Endothelial cell of umbilical vein (primary cell): ENCODE measurements at regions of chr7 and their contacts with region 1.

Region 1: GRCh38 chr7:139731802-139732470 is 45.9 kb downstream of the HIPK2 start:
- DNase-seq: peak; percentile 81
- H3K4me3 ChIP-seq: peak overlapping the region in 1 of 3 experiments; percentile 50
- H3K27ac ChIP-seq: peak overlapping the region; percentile 87
- H3K4me1 ChIP-seq: peaks cover 53% of the 10 kb centered on the region
- H3K27me3 ChIP-seq: no peaks in the 10 kb centered on the region
- CTCF ChIP-seq: no peak
- POLR2A ChIP-seq: no peak

Region 2: DNA sequence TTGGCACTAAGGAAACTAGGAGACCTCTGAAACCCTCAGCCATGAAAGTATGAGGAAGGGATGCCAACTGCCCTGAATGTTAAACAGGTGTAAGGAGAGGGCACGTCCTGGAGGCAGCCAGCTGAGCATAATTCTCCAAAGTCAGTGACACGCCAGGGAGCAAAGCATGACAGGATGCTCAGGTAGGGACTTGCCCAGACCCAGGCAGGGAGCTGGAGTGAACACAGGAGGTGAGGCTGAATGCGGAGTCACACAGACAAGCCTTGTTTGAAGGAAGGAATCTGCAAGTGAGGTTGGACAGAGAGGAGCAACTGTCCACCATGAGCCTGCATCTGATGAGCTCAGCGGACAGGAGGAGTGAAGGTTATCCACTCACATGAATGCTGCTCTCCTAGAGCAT is 290.0 kb before region 1 on chr7:
- CTCF ChIA-PET with region 1: no interaction called
- POLR2A ChIA-PET with region 1: no interaction called
- dilution Hi-C with region 1: no loop called
- intact Hi-C with region 1: no loop called
- DNase-seq: no peak
- H3K4me3 ChIP-seq: no peak overlapping the region
- H3K27ac ChIP-seq: no peak overlapping the region
- H3K4me1 ChIP-seq: no peaks in the 10 kb centered on the region
- H3K27me3 ChIP-seq: no peaks in the 10 kb centered on the region
- CTCF ChIP-seq: no peak
- POLR2A ChIP-seq: no peak

Region 3: GRCh38 chr7:139680676-139681462 is 51.1 kb before region 1 on chr7:
- CTCF ChIA-PET with region 1: interaction called, 4 read pairs
- POLR2A ChIA-PET with region 1: no interaction called
- dilution Hi-C with region 1: no loop called
- intact Hi-C with region 1: loop called (anchors 1 kb)
- DNase-seq: peak; percentile 91
- H3K4me3 ChIP-seq: no peak overlapping the region
- H3K27ac ChIP-seq: peak overlapping the region; percentile 92
- H3K4me1 ChIP-seq: peaks cover 46% of the 10 kb centered on the region
- H3K27me3 ChIP-seq: no peaks in the 10 kb centered on the region
- CTCF ChIP-seq: no peak
- POLR2A ChIP-seq: peak; percentile 70